ENCODE measurements at regions of chr17 and their contacts with region 1.

Region 1: GRCh38 chr17:37770631-37771518 is 26.0 kb upstream of the HNF1B start:
- DNase-seq: peak; percentile 60

Region 2: GRCh38 chr17:37759014-37759637 is 11.7 kb before region 1 on chr17:
- CTCF ChIA-PET with region 1: interaction called, 12 read pairs
- POLR2A ChIA-PET with region 1: interaction called, 3 read pairs
- DNase-seq: no peak